Left colon (tissue), 2 donors: ENCODE measurements at regions of chr11 and their contacts with region 1.

Region 1: DNA sequence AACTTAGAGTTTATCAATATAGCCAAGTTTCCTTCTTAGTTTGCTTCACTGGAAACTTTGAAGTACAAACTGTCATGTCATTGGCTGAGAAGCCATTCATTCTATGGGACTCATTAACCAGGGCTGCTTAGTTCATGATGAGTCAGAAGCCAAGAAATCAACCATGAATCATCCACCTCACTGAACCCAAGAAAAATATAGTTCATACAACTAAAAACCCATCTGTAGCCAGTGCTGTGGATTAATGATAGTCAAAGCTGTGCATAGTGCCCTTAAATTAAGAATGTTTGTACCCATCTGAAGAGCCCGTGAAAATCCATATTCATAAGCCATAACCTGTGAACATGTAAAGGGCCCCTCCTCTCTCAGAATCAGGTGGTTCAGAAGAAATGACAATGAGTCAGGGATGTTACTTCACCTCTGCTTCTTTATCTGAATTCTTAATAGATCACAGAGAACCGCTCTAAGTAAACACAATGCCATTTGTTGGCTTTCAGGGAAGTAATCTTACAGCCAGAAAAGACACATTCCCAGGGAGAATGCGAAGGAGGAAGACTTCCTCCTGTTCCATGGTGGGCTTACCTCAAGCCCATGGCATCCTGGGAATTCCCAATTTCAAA is 25.4 kb downstream of the MMP20 start:
- DNase-seq: no peak
- ATAC-seq: peak; percentile 87

Region 2: GRCh38 chr11:102500829-102501228 is 98.9 kb before region 1 on chr11:
- intact Hi-C with region 1: loop called in 1 of 2 experiments (anchors 10 kb)
- DNase-seq: no peak
- ATAC-seq: no peak